Transverse colon (tissue), 4 donors: ENCODE measurements at regions of chr1 and their contacts with region 1.

Region 1: DNA sequence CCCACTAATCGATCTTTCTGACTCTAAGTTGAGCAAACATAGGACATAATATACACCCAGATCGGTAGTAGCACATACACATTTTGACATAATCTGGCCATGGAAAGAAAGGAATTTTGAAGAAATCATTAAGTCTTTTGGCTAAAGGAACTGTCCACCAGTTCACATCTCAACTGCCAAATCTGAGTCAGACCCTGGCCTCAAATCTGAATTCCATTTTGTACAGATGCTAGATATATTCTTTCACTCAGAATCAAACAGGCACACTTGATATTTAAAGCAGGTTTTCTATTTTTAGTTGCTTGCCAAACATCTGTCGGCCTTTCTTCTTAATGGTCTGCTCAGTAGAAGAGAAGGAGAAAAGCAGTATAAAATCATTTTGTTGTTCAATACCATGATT is 281.8 kb downstream of the BARHL2 start:
- DNase-seq: no peak
- H3K4me3 ChIP-seq: no peak overlapping the region
- H3K27ac ChIP-seq: no peak overlapping the region
- H3K4me1 ChIP-seq: no peaks in the 10 kb centered on the region
- H3K27me3 ChIP-seq: no peaks in the 10 kb centered on the region
- CTCF ChIP-seq: no peak
- EP300 ChIP-seq: no peak
- POLR2A ChIP-seq: no peak

Region 2: DNA sequence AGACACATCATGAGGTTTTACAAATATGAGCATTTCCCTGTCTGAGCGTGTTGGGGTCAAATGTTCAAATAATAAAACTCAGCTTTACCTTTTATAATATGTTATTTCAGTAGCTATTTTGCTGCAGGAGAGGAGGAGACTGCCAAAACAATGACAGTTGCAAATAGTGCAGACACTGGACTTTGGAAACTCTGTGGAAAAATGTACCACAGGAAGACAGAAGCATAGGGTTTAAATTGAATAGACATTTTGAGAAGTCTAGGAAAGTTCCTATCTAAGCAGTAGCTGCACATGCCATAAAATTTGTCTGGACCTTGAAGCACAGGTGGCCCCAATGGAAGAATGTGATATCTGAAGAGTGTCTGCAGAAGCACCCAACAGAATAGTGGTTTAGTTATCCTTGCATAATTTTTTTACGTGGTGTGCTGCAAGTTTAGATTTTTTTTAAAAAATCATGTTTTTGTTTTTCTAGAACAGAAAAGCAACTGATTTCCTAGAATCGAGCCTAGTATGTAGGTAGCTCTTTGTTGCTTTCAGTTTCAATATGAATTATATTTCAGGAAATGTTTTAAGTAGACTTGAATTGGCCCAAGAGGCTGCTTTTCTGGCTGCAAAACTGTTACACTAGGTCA is 1148.7 kb before region 1 on chr1:
- in situ Hi-C with region 1: no loop called
- intact Hi-C with region 1: loop called (anchors 5 kb)
- DNase-seq: no peak
- H3K4me3 ChIP-seq: peak overlapping the region in 2 of 4 donors; percentile 6 to 29
- H3K27ac ChIP-seq: peak overlapping the region; percentile 23 to 67 (median 55)
- H3K4me1 ChIP-seq: peaks cover 0 to 23% (median 9%) of the 10 kb centered on the region in 4 donors
- H3K27me3 ChIP-seq: no peaks in the 10 kb centered on the region
- CTCF ChIP-seq: no peak
- EP300 ChIP-seq: no peak
- POLR2A ChIP-seq: no peak